Mammary epithelial cell (primary cell): ENCODE measurements at regions of chr17 and their contacts with region 1.

Region 1: DNA sequence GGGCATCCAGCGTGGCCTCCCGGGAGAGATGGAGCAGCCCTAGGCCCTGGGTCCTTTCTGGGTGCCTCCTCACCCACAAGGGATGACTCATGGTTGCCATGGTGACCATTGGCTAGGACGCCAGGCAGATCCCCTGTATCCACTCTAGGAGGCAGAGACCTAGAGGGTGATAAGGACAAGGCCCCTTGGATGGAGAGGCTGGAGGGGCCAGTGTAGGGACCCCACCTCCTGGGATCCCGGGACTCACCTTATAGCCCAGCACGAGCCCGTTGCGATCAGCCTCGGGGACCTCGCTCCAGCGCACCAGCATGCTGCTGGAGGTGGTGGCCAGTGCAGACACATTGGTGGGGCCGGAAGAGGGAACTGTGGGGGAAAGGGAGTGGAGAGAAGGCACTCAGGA is 82.2 kb upstream of the CDC42EP4 start:
- DNase-seq: peak; percentile 30
- H3K4me3 ChIP-seq: no peak overlapping the region
- H3K27ac ChIP-seq: no peak overlapping the region
- H3K4me1 ChIP-seq: no peaks in the 10 kb centered on the region
- H3K27me3 ChIP-seq: no peaks in the 10 kb centered on the region
- CTCF ChIP-seq: no peak

Region 2: DNA sequence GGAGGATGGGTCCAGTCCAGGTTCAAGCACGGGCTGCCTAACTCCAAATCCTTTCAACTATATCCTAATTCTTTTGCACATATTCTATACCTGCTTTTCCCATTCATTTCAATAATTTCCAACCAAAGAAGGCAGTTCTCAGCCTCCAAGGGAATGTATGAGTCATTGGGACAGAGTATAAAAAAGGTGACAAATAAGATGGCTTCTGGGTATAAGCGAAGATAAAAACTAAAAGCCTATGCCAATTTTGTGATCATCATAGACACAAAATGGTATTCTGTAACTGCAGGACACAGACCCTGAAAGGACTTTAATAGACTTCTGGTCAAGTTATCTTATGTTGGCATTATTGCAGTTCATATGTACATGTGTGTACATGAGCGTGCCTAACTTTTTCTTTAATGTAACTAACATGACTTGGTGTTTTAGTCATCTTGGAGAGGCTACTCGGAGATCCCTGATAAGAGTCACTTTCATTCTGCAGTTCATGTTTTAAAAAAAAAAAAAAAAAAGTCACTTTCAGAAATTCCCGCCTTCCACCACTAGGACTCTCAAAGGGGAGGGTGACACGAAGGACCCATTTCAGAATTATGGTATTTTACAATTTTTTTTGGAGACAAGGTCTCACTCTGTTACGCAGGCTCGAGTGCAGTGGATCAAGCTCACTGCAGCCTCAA is 183.8 kb before region 1 on chr17:
- CTCF ChIA-PET with region 1: no interaction called
- dilution Hi-C with region 1: no loop called
- in situ Hi-C with region 1: no loop called
- intact Hi-C with region 1: no loop called
- DNase-seq: no peak
- H3K4me3 ChIP-seq: no peak overlapping the region
- H3K27ac ChIP-seq: no peak overlapping the region
- H3K4me1 ChIP-seq: peaks cover 12% of the 10 kb centered on the region
- H3K27me3 ChIP-seq: no peaks in the 10 kb centered on the region
- CTCF ChIP-seq: peak; percentile 34 to 37

Region 3: DNA sequence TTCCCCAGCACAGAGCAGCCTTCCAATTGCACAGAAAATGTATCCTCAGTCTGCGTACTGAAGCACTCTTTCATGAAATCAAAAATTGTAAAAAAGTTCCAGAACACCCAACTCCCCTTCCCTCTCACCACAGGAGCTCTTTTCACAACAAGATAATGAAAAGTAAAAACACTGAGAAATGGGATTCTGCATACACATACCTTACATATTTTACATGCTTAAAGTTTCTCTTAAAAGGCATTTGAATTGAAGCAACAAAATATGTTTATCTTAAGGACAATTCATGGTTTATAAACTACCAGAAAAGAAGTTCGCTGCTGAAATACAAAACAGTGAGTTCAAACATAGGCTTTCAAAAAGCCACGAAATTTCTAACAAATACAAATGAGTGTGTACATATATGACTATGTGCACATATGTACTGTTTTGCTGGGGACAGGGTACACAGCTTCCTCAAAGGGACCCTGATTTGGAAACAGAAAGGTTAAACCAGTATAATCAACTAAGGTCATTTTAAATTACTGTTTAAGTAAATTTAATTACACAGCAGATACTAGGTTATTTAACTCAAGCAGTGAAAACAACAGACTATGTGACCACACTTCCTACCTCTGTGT is 167.3 kb before region 1 on chr17:
- CTCF ChIA-PET with region 1: no interaction called
- dilution Hi-C with region 1: no loop called
- in situ Hi-C with region 1: no loop called
- intact Hi-C with region 1: no loop called
- DNase-seq: no peak
- H3K4me3 ChIP-seq: no peak overlapping the region
- H3K27ac ChIP-seq: peak overlapping the region; percentile 26
- H3K4me1 ChIP-seq: peaks cover 48% of the 10 kb centered on the region
- H3K27me3 ChIP-seq: no peaks in the 10 kb centered on the region
- CTCF ChIP-seq: no peak

Region 4: DNA sequence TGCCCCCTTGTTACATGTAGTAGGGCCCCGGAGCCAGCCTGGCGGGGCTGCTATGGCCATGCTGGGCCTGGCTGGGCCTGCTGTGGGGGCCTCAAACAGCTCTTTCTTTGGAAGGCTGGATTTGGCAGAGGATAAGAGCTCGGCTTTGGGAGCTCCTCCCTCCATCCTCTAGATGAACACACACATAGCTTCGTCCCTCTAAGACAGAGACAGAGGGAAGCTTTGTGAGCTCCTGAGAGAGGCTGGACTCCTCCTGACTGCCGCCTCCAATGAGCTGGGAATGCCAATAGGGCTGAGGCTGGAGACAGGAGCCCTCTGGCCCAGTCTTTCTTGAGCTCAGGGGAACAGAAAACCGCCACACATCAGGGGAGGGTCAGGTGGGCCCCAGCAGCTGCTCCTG is 44.8 kb before region 1 on chr17:
- CTCF ChIA-PET with region 1: no interaction called
- dilution Hi-C with region 1: loop called (anchors 5 kb)
- in situ Hi-C with region 1: no loop called
- intact Hi-C with region 1: no loop called
- DNase-seq: no peak
- H3K4me3 ChIP-seq: no peak overlapping the region
- H3K27ac ChIP-seq: no peak overlapping the region
- H3K4me1 ChIP-seq: no peaks in the 10 kb centered on the region
- H3K27me3 ChIP-seq: no peaks in the 10 kb centered on the region
- CTCF ChIP-seq: no peak

Region 5: DNA sequence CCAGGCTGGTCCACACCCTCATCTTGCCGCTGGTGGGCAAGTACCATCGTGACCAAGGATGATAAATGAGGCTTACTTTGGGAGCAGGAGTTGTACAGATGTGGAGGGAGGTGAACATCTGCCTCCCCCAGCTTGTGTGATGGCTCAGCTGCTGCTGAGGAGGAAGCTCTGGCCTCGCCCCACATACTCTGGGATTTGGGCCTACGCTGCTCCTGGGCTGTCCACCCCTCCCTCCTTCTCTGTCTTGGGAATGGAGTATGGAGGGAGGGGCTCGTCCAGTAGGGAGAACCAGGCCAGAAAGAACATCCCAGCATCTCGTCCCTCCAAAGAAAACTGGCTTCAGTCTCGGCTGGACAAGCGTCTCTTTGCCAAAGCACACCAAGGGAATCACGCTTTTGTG is 52.7 kb after region 1 on chr17:
- CTCF ChIA-PET with region 1: no interaction called
- dilution Hi-C with region 1: loop called (anchors 5 kb)
- in situ Hi-C with region 1: no loop called
- intact Hi-C with region 1: no loop called
- DNase-seq: no peak
- H3K4me3 ChIP-seq: no peak overlapping the region
- H3K27ac ChIP-seq: no peak overlapping the region
- H3K4me1 ChIP-seq: no peaks in the 10 kb centered on the region
- H3K27me3 ChIP-seq: no peaks in the 10 kb centered on the region
- CTCF ChIP-seq: no peak